Sigmoid colon (tissue), 7 donors: ENCODE measurements at regions of chr19 and their contacts with region 1.

Region 1: GRCh38 chr19:4723367-4724187 is at the start of gene DPP9:
- DNase-seq: peak; percentile 99
- H3K4me3 ChIP-seq: peak within 1 kb of the TSS; percentile 66 to 100 (median 92)
- H3K27ac ChIP-seq: peak within 1 kb of the TSS; percentile 82 to 97 (median 91)
- H3K4me1 ChIP-seq: peaks cover 0 to 25% (median 20%) of the 10 kb centered on the region in 4 donors
- H3K27me3 ChIP-seq: no peaks in the 10 kb centered on the region
- CTCF ChIP-seq: no peak
- EP300 ChIP-seq: peak in 1 of 4 donors; percentile 21
- POLR2A ChIP-seq: no peak
- total RNA-seq, gene DPP9: 29.6 to 90.6 (median 40.5) TPM

Region 2: GRCh38 chr19:4678881-4679815 is 44.4 kb before region 1 on chr19:
- intact Hi-C with region 1: no loop called
- DNase-seq: no peak
- H3K4me3 ChIP-seq: no peak overlapping the region
- H3K27ac ChIP-seq: peak overlapping the region; percentile 12 to 49 (median 23)
- H3K4me1 ChIP-seq: peaks cover 0 to 8% (median 6%) of the 10 kb centered on the region in 4 donors
- H3K27me3 ChIP-seq: no peaks in the 10 kb centered on the region
- CTCF ChIP-seq: no peak
- EP300 ChIP-seq: no peak
- POLR2A ChIP-seq: no peak

Region 3: GRCh38 chr19:4694209-4694987 is 29.2 kb before region 1 on chr19:
- intact Hi-C with region 1: no loop called
- DNase-seq: peak; percentile 88
- H3K4me3 ChIP-seq: no peak overlapping the region
- H3K27ac ChIP-seq: peak overlapping the region in 3 of 4 donors; percentile 40 to 74 (median 40)
- H3K4me1 ChIP-seq: peaks cover 0 to 8% (median 0%) of the 10 kb centered on the region in 4 donors
- H3K27me3 ChIP-seq: no peaks in the 10 kb centered on the region
- CTCF ChIP-seq: no peak
- EP300 ChIP-seq: no peak
- POLR2A ChIP-seq: no peak

Region 4: DNA sequence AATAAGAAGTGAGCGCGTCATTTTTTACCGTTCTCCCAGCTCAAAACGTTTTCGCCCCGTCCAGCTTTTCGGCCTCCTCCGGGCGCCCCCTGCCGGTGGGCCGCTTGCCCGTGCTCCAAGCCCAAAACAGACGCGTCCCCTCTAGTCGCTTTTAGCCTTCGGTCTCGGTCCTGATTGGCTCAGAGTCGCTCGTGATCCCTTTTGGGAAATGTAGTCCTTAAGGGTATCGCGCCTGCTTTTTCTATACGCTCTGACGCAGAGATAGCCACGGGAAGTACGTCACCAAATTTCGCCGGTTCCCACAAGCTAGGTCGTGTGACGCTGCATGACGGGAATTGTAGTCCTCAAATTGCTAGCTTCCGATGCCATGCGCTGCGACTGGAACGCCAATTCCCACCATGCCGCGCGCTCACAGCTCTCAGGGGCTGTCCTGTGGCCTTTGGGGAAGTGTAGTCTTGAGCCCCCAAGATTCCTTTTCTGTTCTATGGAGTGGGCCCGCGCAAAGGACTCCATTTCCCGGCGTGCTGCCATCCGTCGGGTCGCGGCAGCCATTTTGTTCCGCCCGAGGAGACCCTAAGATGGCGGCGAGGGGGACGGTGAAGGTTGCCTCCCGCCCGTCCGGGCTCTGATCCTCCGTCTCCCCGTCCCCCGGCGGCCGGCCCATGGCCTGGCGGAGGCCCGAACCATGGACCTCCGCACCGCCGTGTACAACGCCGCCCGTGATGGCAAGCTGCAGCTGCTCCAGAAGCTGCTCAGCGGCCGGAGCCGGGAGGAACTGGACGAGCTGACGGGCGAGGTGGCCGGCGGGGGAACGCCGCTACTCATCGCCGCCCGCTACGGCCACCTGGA is 67.8 kb after region 1 on chr19 and contains the start of gene FEM1A:
- intact Hi-C with region 1: loop called (anchors 1 kb)
- DNase-seq: peak; percentile 100
- H3K4me3 ChIP-seq: peak within 1 kb of the TSS; percentile 91 to 99 (median 96)
- H3K27ac ChIP-seq: peak within 1 kb of the TSS; percentile 94 to 97 (median 96)
- H3K4me1 ChIP-seq: peaks cover 0 to 45% (median 34%) of the 10 kb centered on the region in 4 donors
- H3K27me3 ChIP-seq: no peaks in the 10 kb centered on the region
- CTCF ChIP-seq: peak; percentile 91 to 99 (median 98)
- EP300 ChIP-seq: peak in 2 of 4 donors; percentile 60 to 64
- POLR2A ChIP-seq: peak; percentile 67 to 83
- total RNA-seq, gene FEM1A: 10.2 to 12.9 (median 11.8) TPM

Region 5: GRCh38 chr19:4867534-4868285 is 144.1 kb after region 1 on chr19 and contains the start of gene PLIN3:
- intact Hi-C with region 1: loop called (anchors 10 kb)
- DNase-seq: peak; percentile 99
- H3K4me3 ChIP-seq: peak within 1 kb of the TSS; percentile 55 to 94 (median 84)
- H3K27ac ChIP-seq: peak within 1 kb of the TSS; percentile 83 to 89 (median 88)
- H3K4me1 ChIP-seq: peaks cover 0 to 19% (median 8%) of the 10 kb centered on the region in 4 donors
- H3K27me3 ChIP-seq: no peaks in the 10 kb centered on the region
- CTCF ChIP-seq: no peak
- EP300 ChIP-seq: no peak
- POLR2A ChIP-seq: peak in 1 of 2 donors; percentile 49
- total RNA-seq, gene PLIN3: 20.3 to 34.2 (median 26.7) TPM

Region 6: GRCh38 chr19:4976401-4977298 is 253.1 kb after region 1 on chr19:
- intact Hi-C with region 1: loop called (anchors 10 kb)
- DNase-seq: peak; percentile 98
- H3K4me3 ChIP-seq: peak overlapping the region; percentile 2 to 28 (median 4)
- H3K27ac ChIP-seq: peak overlapping the region; percentile 87 to 94 (median 90)
- H3K4me1 ChIP-seq: peaks cover 0 to 90% (median 80%) of the 10 kb centered on the region in 4 donors
- H3K27me3 ChIP-seq: no peaks in the 10 kb centered on the region
- CTCF ChIP-seq: peak in 2 of 4 experiments; percentile 47 to 49
- EP300 ChIP-seq: peak; percentile 89 to 97 (median 94)
- POLR2A ChIP-seq: no peak